ENCODE measurements at regions of chr6 and their contacts with region 1.

Region 1: GRCh38 chr6:53437557-53438202 is 88.9 kb upstream of the ELOVL5 start:
- DNase-seq: peak; percentile 90
- ATAC-seq: peak; percentile 79
- H3K4me3 ChIP-seq: no peak overlapping the region
- H3K27ac ChIP-seq: no peak overlapping the region
- H3K4me1 ChIP-seq: peaks cover 20% of the 10 kb centered on the region
- H3K27me3 ChIP-seq: no peaks in the 10 kb centered on the region
- CTCF ChIP-seq: peak; percentile 94

Region 2: DNA sequence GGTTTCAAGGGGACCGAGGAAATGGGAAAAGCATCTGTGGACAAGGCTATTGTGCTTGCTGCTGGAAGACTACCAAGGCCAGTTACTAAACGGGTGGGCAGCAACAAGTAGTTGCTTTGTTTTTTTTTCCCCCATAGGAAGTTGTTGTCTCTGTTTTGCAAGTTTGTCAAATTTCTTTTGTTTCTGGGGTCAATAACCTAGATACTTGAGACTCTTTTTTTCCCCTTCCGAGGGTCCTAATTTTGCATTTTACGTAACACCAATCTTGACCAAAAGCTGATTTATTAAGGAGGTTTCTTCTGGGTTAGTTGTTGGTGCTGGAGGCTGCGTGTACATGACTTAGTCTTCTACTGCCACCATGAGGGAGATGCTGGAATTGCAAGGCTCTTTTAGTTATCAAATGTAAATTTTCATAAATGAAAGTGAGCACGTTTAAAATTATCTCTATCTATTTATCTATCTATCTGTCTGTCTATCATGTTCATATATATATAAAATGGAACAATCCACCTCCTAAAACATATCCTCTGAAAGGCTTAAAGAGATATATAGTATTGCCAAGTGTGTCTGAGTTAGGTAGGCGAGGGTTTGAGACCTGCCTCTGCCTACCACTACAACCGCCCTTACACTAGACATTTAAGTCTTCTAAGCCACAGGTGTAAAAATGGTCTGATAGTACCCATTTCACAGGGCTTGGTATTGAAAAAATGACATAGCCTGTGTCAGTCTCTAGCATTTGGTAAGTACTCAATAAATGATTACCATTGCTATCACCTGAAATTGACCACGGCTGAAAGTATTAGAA is 47.0 kb after region 1 on chr6:
- CTCF ChIA-PET with region 1: interaction called, 3 read pairs
- POLR2A ChIA-PET with region 1: interaction called, 4 read pairs
- intact Hi-C with region 1: loop called (anchors 1 kb)
- DNase-seq: peak; percentile 87
- ATAC-seq: peak; percentile 43
- H3K4me3 ChIP-seq: peak overlapping the region; percentile 32; the same call in 1 of the 2 replicates
- H3K27ac ChIP-seq: no peak overlapping the region
- H3K4me1 ChIP-seq: peaks cover 12% of the 10 kb centered on the region; the same call in 1 of the 2 replicates
- H3K27me3 ChIP-seq: no peaks in the 10 kb centered on the region
- CTCF ChIP-seq: peak; percentile 95